HepG2 (cell line): ENCODE measurements at regions of chr14 and their contacts with region 1.

Region 1: GRCh38 chr14:37508500-37508899 is 86.5 kb downstream of the FOXA1 start:
- DNase-seq: no peak
- ATAC-seq: no peak
- H3K4me3 ChIP-seq: no peak overlapping the region
- H3K27ac ChIP-seq: no peak overlapping the region
- H3K4me1 ChIP-seq: no peaks in the 10 kb centered on the region
- H3K27me3 ChIP-seq: no peaks in the 10 kb centered on the region
- CTCF ChIP-seq: no peak
- EP300 ChIP-seq: no peak
- POLR2A ChIP-seq: no peak
- RAD21 ChIP-seq: no peak

Region 2: DNA sequence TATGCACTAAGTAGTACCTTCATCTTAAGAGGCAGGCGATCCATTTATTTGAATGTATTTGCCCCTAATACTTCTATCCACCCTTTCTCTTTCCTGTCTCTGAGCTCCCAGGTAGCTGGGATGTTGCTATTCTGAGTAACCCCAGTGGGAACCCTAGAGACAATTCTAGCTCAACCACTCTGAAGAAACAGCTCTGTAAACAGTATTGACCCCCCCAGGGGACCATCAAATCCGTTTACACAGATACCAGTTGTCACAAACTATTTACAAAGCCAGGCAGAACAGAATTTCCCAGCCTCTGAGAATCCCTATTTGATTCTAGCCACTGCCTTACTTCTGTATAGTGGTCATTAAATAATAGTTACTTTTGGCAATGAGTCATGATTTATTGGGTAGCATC is 245.9 kb before region 1 on chr14:
- CTCF ChIA-PET with region 1: no interaction called
- POLR2A ChIA-PET with region 1: no interaction called
- in situ Hi-C with region 1: no loop called
- intact Hi-C with region 1: no loop called
- DNase-seq: peak; percentile 34
- ATAC-seq: peak; percentile 66
- H3K4me3 ChIP-seq: no peak overlapping the region
- H3K27ac ChIP-seq: no peak overlapping the region
- H3K4me1 ChIP-seq: peaks cover 5% of the 10 kb centered on the region; the same call in 1 of the 2 replicates
- H3K27me3 ChIP-seq: no peaks in the 10 kb centered on the region
- CTCF ChIP-seq: no peak
- EP300 ChIP-seq: no peak
- POLR2A ChIP-seq: no peak
- RAD21 ChIP-seq: no peak

Region 3: DNA sequence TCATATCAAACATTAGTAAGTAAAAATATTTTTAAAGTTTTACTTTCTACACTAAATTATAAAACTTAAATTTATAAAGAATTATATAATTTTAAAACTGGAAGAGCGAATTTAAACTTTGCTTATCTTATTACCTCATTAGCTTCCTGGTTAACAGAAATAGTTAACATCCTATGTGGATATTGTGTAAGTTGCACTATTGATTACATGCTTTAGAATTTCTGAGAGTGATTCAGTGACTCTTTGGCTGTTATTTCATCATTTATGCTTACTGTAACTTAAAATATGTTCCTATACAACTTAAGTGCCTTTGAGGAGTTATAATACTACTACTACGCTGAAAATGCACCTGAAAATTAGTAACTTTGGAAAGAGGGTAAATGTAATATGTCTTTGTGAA is 14.9 kb before region 1 on chr14:
- CTCF ChIA-PET with region 1: no interaction called
- POLR2A ChIA-PET with region 1: no interaction called
- in situ Hi-C with region 1: no loop called
- intact Hi-C with region 1: loop called (anchors 2 kb)
- DNase-seq: peak; percentile 20
- ATAC-seq: peak; percentile 61
- H3K4me3 ChIP-seq: no peak overlapping the region
- H3K27ac ChIP-seq: peak overlapping the region; percentile 13
- H3K4me1 ChIP-seq: peaks cover 16% of the 10 kb centered on the region
- H3K27me3 ChIP-seq: no peaks in the 10 kb centered on the region
- CTCF ChIP-seq: no peak
- EP300 ChIP-seq: peak; percentile 63 to 65; a peak in 2 of 4 replicates
- POLR2A ChIP-seq: no peak
- RAD21 ChIP-seq: no peak

Region 4: DNA sequence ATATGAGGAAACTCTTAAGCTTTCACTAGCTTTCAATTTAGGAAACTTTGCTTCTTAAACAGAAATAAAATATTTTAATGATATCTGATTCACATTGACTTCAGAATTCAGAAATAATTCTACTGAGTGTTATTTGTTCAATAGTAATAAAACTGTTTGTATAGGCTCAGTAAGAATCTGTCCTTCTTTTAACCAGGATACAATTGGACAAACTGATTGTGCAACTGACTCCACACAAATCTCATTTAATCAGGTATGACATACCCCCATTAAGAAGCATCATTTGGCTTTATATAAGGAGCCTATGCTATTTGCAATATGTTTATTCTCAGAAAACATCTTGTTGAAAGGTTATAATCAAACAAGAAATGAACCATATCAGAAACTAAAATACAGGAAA is 407.8 kb after region 1 on chr14:
- CTCF ChIA-PET with region 1: no interaction called
- POLR2A ChIA-PET with region 1: no interaction called
- in situ Hi-C with region 1: no loop called
- intact Hi-C with region 1: no loop called
- DNase-seq: no peak
- ATAC-seq: no peak
- H3K4me3 ChIP-seq: no peak overlapping the region
- H3K27ac ChIP-seq: no peak overlapping the region
- H3K4me1 ChIP-seq: no peaks in the 10 kb centered on the region
- H3K27me3 ChIP-seq: no peaks in the 10 kb centered on the region; a peak in 1 of 5 replicates
- CTCF ChIP-seq: no peak
- EP300 ChIP-seq: no peak
- POLR2A ChIP-seq: no peak
- RAD21 ChIP-seq: no peak